Upper lobe of right lung (tissue), 1 donor: ENCODE measurements at regions of chr15 and their contacts with region 1.

Region 1: GRCh38 chr15:97899981-97900380 is 60.5 kb upstream of the ARRDC4 start:
- DNase-seq: no peak
- ATAC-seq: no peak
- H3K4me3 ChIP-seq: no peak overlapping the region
- H3K27ac ChIP-seq: no peak overlapping the region
- H3K4me1 ChIP-seq: peaks cover 6% of the 10 kb centered on the region
- H3K27me3 ChIP-seq: peaks cover 19% of the 10 kb centered on the region
- CTCF ChIP-seq: no peak

Region 2: GRCh38 chr15:98051734-98052133 is 151.8 kb after region 1 on chr15:
- intact Hi-C with region 1: no loop called
- DNase-seq: no peak
- ATAC-seq: no peak
- H3K4me3 ChIP-seq: no peak overlapping the region
- H3K27ac ChIP-seq: no peak overlapping the region
- H3K4me1 ChIP-seq: no peaks in the 10 kb centered on the region
- H3K27me3 ChIP-seq: no peaks in the 10 kb centered on the region
- CTCF ChIP-seq: no peak

Region 3: DNA sequence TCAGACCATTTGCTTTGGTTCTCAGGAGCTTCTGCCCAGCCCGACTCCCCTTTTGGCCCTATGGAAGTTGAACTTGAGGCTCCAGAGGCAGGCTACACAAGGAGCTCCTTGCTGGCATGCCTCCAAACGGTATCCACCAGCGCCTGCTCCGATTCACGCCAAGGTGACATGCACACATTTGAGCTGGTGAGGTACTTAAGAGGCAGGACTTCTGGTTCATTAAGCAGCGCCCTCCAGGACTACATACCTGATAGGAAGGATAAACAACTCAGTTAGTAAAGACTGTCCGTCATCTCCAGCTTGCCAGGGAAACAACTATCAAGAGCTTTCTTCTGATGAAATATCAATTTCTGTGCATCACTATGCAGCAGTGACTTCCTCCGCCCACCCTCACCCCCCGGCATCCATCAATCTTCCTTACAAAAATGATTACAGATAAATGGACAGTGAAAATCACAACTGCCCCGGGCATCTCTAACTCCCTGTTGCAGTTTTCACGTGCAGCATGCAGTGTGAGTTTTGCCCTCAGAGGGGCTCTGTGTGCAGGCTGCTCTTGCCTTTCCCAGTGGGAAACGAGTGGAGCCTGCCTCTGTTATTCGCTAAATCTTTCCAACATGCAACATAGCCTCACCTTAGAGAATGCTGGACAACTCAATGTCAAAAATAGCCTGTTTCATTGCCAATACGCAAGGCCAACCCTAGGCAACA is 183.4 kb after region 1 on chr15:
- intact Hi-C with region 1: loop called (anchors 5 kb)
- DNase-seq: no peak
- ATAC-seq: no peak
- H3K4me3 ChIP-seq: no peak overlapping the region
- H3K27ac ChIP-seq: no peak overlapping the region
- H3K4me1 ChIP-seq: no peaks in the 10 kb centered on the region
- H3K27me3 ChIP-seq: no peaks in the 10 kb centered on the region
- CTCF ChIP-seq: no peak